ENCODE measurements at regions of chr1 and their contacts with region 1.

Region 1: DNA sequence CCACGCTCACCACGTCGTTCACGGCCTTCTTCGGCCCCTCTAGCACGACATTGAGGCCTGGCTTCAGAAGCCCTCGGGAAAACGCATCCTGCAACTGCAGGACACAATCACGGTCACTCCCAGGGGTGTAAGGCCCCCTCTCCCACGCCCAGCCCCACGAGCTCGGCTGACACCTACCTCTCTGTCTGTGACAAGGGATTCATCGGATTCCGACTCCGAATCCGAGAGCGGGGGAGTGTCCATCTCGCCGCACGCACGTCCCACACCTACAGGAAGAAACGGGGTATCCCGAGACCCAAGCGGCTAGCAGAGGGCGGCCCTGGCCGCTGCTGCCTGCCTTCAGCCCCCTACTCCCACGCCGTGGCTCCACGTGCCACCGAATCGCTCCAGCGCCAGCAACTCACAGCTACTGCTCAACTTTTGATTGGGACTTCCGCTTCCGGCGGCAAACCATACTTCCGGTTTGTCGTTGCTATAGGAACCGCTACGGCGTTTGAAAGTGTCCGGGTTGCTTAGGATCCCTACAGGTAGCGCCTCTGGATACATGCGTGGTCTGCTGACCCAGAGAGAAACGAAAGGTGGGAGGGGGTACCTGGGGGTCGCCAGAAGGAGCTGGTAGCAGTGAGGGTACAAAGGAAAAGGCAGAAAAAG is at the starts of genes CFAP57 and EBNA1BP2:
- DNase-seq: peak; percentile 89
- H3K4me3 Mint-ChIP-seq: peak within 1 kb of the TSS; percentile 96
- H3K27ac Mint-ChIP-seq: peak within 1 kb of the TSS; percentile 86
- H3K4me1 Mint-ChIP-seq: peaks cover 16% of the 10 kb centered on the region
- H3K27me3 Mint-ChIP-seq: peaks cover 20% of the 10 kb centered on the region
- total RNA-seq, gene CFAP57: not detected in 2 replicates
- total RNA-seq, gene EBNA1BP2: 126 and 132 TPM in 2 replicates

Region 2: DNA sequence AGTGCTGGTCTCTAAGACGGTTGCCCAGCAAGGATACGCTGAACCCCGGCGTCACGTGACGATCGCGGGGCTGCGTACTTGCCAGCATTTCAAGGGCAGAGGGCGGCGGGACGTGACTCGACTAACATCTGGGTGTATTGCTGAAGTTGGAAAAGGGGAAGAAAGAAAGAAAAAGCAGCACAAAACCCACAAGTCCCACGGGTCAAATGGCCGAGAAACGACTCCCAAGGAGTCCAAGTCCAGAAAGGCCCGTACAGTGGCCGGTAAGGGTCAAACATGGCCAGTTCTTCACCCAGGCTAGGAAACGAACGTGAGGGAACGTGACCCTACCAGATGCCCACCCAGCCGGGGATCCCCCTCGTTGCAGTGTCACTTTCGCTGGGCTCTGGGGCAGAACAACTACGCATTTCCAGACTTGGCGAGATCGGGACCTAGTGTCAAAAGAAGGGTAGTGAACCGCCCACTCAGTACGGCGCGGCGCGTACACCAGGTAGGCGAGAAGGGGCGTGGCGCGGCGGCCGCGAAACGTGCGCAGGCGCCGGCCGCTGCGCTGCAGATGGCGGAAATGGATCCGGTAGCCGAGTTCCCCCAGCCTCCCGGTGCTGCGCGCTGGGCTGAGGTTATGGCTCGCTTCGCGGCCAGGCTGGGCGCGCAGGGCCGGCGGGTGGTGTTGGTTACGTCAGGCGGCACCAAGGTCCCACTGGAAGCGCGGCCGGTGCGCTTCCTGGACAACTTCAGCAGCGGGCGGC is 715.8 kb before region 1 on chr1 and contains the starts of genes PPCS and ZMYND12:
- intact Hi-C with region 1: loop called (anchors 1 kb)
- DNase-seq: peak; percentile 87
- H3K4me3 Mint-ChIP-seq: peak within 1 kb of the TSS; percentile 95
- H3K27ac Mint-ChIP-seq: peak within 1 kb of the TSS; percentile 98
- H3K4me1 Mint-ChIP-seq: peaks cover 28% of the 10 kb centered on the region
- H3K27me3 Mint-ChIP-seq: no peaks in the 10 kb centered on the region
- total RNA-seq, gene PPCS: 40.1 and 48.0 TPM in 2 replicates
- total RNA-seq, gene ZMYND12: not detected in 2 replicates

Region 3: GRCh38 chr1:42846257-42847110 is 325.5 kb before region 1 on chr1 and contains the start of gene ZNF691:
- intact Hi-C with region 1: loop called (anchors 10 kb)
- DNase-seq: peak; percentile 86
- H3K4me3 Mint-ChIP-seq: peak within 1 kb of the TSS; percentile 97
- H3K27ac Mint-ChIP-seq: peak within 1 kb of the TSS; percentile 78
- H3K4me1 Mint-ChIP-seq: peaks cover 41% of the 10 kb centered on the region
- H3K27me3 Mint-ChIP-seq: no peaks in the 10 kb centered on the region
- total RNA-seq, gene ZNF691: 10.0 and 12.9 TPM in 2 replicates

Region 4: GRCh38 chr1:42913426-42914091 is 258.4 kb before region 1 on chr1:
- intact Hi-C with region 1: no loop called
- DNase-seq: peak; percentile 49
- H3K4me3 Mint-ChIP-seq: no peak overlapping the region
- H3K27ac Mint-ChIP-seq: no peak overlapping the region
- H3K4me1 Mint-ChIP-seq: peaks cover 7% of the 10 kb centered on the region
- H3K27me3 Mint-ChIP-seq: peaks cover 4% of the 10 kb centered on the region

Region 5: DNA sequence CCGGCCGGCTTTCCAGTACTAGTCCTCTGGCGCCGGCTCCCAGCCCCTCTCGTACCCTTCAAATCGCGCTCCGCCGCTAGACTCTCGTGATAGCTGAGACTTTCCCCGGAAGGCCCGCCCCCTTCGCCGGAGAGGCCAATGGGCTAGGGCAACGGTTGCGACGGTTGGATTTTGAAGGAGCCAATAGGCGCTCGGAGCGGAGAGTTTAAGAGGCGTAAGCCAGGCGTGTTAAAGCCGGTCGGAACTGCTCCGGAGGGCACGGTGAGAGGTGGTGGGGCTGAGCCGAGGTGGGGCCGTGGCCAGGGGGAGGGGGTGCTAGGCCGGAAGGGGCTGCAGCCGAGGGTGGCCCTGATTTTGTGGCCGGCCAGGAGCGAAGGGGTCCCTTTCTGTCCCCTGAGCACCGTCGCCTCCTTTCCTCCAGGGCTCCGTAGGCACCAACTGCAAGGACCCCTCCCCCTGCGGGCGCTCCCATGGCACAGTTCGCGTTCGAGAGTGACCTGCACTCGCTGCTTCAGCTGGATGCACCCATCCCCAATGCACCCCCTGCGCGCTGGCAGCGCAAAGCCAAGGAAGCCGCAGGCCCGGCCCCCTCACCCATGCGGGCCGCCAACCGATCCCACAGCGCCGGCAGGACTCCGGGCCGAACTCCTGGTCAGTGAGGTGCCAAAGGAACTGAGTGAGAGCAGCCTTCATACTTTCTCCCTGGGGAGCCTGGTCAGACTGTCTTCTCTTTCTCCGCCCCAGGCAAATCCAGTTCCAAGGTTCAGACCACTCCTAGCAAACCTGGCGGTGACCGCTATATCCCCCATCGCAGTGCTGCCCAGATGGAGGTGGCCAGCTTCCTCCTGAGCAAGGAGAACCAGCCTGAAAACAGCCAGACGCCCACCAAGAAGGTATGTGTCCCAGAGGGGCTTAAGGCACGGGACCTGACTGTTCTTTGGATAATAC is 187.0 kb after region 1 on chr1 and contains the start of gene CDC20:
- intact Hi-C with region 1: loop called (anchors 1 kb)
- DNase-seq: peak; percentile 99
- H3K4me3 Mint-ChIP-seq: peak within 1 kb of the TSS; percentile 96
- H3K27ac Mint-ChIP-seq: peak within 1 kb of the TSS; percentile 92
- H3K4me1 Mint-ChIP-seq: peaks cover 50% of the 10 kb centered on the region
- H3K27me3 Mint-ChIP-seq: no peaks in the 10 kb centered on the region
- total RNA-seq, gene CDC20: 82.9 and 91.8 TPM in 2 replicates

Region 6: DNA sequence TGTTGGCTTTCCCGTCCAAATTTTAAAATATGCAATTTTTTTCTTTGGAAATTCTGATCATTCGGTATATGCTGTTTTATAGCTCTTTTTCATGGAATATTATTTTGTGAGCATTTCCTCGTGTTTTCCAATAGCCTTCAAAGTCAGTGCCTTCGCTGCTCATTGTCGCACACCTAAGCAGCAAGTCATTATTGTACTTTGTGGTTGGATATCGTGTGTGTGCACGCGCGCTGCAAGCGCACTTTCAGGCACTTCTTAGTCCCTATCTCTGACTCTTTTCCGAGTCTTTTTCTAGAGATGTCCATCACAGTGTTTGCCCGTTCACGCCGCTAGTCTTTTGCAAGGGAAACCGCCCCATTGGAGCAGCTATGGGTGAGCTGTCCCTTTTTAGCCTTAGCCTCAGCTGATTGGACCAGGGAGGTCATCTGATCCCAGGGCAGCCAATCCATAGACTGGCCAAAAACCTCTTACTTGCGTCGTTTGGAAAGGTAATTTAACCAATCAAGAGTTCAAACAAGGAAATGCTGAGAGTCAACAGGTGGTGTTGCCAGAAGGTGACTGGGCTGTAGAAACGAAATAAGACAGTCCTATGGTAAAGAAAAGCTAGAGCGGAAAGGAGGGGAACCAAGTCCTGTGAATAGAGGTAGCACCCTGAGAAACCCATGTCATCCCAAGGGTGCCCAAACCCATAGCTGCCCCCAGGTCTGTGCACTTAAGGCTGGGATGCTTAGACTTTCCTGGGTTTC is 282.4 kb after region 1 on chr1:
- intact Hi-C with region 1: loop called (anchors 1 kb)
- DNase-seq: peak; percentile 61
- H3K4me3 Mint-ChIP-seq: peak overlapping the region; percentile 84
- H3K27ac Mint-ChIP-seq: peak overlapping the region; percentile 79
- H3K4me1 Mint-ChIP-seq: peaks cover 18% of the 10 kb centered on the region
- H3K27me3 Mint-ChIP-seq: peaks cover 28% of the 10 kb centered on the region

Region 7: GRCh38 chr1:44029906-44030604 is 858.1 kb after region 1 on chr1:
- intact Hi-C with region 1: loop called (anchors 1 kb)
- DNase-seq: peak; percentile 86
- H3K4me3 Mint-ChIP-seq: peak overlapping the region; percentile 90
- H3K27ac Mint-ChIP-seq: peak overlapping the region; percentile 92
- H3K4me1 Mint-ChIP-seq: peaks cover 30% of the 10 kb centered on the region
- H3K27me3 Mint-ChIP-seq: peaks cover 2% of the 10 kb centered on the region